ENCODE measurements at regions of chr14 and their contacts with region 1.

Region 1: GRCh38 chr14:28344381-28344780 is 422.2 kb upstream of the FOXG1 start:
- DNase-seq: no peak

Region 2: DNA sequence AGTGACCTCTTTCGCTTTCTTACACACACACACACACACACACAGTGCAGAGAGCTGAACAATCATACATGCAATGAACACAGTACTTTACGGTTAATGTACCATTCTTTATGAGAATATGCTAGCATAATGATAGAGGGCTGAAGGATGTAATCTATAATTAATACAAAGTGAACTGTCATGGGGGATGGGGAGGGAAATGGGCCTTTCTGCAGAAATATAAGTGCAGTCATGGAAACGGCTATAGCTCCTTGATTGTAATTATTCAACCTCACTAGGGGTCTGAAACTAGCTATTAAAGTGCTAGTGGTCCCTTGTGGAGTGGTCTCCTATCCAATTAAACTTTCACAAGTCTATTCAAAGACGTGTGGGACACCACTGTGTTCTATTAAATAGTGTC is 21.0 kb before region 1 on chr14:
- intact Hi-C with region 1: no loop called
- DNase-seq: no peak

Region 3: DNA sequence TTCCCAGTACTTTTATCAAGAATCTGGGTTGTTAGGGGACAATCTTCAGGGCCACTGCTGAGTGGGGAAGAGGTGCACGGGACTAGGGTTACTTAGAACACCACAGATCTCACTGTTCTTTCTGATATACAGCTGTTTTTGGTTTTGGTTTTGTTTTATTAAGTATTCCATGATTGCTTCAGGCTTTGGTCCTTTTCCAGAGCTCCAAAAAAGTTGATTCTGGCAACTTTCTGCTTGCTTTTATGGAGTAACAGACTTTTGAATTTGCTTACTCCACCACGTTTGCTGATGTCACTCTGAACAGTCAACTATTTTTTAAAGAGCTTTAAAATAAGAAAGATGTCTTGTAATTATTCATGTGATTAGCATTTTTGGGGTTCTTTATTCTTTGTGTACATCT is 54.1 kb after region 1 on chr14:
- intact Hi-C with region 1: loop called in 1 of 2 experiments (anchors 2 kb)
- DNase-seq: no peak